Activated CD4-positive, alpha-beta memory T cell treated with anti-CD3 and anti-CD28 coated beads, Interleukin-2, amount 10 ng/mL, durations not matched to agents 7 days and 5 days (primary cell): ENCODE measurements at regions of chr7 and their contacts with region 1.

Region 1: DNA sequence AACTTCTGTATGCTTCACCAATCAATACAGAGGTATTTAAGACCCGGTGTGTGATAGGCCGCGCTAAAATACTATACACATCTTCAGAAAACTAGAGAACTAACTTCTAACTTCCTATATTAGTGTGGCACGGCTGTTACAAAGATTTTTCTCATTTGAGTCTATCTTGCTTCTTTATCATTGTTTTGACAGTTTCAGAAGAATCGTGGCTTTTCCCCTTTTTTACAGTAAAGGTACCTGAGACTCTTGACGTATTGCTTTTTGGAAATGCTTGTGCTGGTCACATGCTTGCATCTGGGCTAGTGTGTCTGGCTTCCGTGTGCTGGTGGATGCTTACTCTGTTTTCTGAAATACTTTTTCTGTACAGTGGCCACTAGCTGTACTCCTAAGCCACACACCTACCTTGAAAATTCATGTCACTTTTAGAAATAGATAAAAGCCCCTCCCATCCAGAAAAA is 12.7 kb downstream of the IKZF1 start:
- DNase-seq: peak; percentile 64
- H3K4me3 Mint-ChIP-seq: peak overlapping the region; percentile 68
- H3K27ac Mint-ChIP-seq: peak overlapping the region; percentile 99
- H3K4me1 Mint-ChIP-seq: peaks cover 93% of the 10 kb centered on the region
- H3K27me3 Mint-ChIP-seq: no peaks in the 10 kb centered on the region

Region 2: GRCh38 chr7:50212666-50213621 is 104.3 kb before region 1 on chr7:
- CTCF ChIA-PET with region 1: interaction called, 47 read pairs
- POLR2A ChIA-PET with region 1: interaction called, 367 read pairs
- DNase-seq: peak; percentile 57
- H3K4me3 Mint-ChIP-seq: peak overlapping the region; percentile 15
- H3K27ac Mint-ChIP-seq: peak overlapping the region; percentile 83
- H3K4me1 Mint-ChIP-seq: peaks cover 91% of the 10 kb centered on the region
- H3K27me3 Mint-ChIP-seq: no peaks in the 10 kb centered on the region

Region 3: DNA sequence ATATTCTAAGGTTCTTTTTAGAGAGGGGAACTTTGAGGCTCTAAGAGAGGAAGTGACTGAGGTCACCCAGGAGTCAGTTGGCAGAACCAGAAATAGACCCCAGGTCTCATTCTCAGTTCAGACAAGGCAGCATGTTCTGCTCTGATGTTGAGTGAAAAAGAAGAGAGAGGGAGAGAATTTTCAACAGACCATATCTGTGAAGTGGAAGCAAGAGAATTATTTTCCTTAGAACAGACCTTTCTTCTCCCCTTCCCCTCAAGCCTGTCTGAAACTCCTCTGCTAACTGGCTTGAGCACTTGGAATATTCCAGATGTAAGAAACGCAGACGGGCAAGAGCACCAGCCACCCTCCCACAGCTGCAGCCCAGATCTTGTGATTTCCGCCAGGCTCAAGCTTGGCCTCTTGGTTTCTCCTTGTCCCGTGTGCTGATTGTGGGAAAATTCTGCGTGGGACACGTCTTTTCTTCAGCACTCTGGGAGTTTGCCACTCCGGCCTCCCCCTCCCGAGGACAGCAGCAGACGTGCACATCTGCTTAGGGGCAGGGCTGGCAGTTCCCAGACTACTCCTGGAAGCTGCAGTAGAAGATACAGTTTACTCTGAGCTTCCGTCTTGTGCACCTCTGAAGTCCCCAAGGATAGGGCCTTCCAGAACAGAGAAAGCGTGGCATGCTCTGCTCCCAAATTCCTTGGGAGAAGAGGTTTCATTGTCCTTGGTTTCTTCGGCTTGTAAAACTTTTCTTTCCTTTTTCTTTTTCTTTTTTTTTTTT is 35.4 kb before region 1 on chr7:
- CTCF ChIA-PET with region 1: no interaction called
- POLR2A ChIA-PET with region 1: no interaction called
- DNase-seq: no peak
- H3K4me3 Mint-ChIP-seq: peak overlapping the region; percentile 43
- H3K27ac Mint-ChIP-seq: peak overlapping the region; percentile 21
- H3K4me1 Mint-ChIP-seq: peaks cover 34% of the 10 kb centered on the region
- H3K27me3 Mint-ChIP-seq: peaks cover 6% of the 10 kb centered on the region

Region 4: GRCh38 chr7:50304158-50304910 is 12.9 kb before region 1 on chr7 and contains the start of gene IKZF1:
- CTCF ChIA-PET with region 1: interaction called, 22 read pairs
- POLR2A ChIA-PET with region 1: interaction called, 338 read pairs
- DNase-seq: peak; percentile 58
- H3K4me3 Mint-ChIP-seq: peak within 1 kb of the TSS; percentile 88
- H3K27ac Mint-ChIP-seq: peak within 1 kb of the TSS; percentile 99
- H3K4me1 Mint-ChIP-seq: peaks cover 29% of the 10 kb centered on the region
- H3K27me3 Mint-ChIP-seq: peaks cover 8% of the 10 kb centered on the region
- total RNA-seq, gene IKZF1: 383 to 404 TPM

Region 5: GRCh38 chr7:50342616-50343114 is 25.4 kb after region 1 on chr7:
- CTCF ChIA-PET with region 1: interaction called, 11 read pairs
- POLR2A ChIA-PET with region 1: interaction called, 1,125 read pairs
- DNase-seq: peak; percentile 62
- H3K4me3 Mint-ChIP-seq: peak overlapping the region; percentile 68
- H3K27ac Mint-ChIP-seq: no peak overlapping the region
- H3K4me1 Mint-ChIP-seq: peaks cover 27% of the 10 kb centered on the region
- H3K27me3 Mint-ChIP-seq: no peaks in the 10 kb centered on the region